CD4-positive, alpha-beta memory T cell (primary cell): ENCODE measurements at regions of chr1 and their contacts with region 1.

Region 1: GRCh38 chr1:90710579-90711536 is 6.2 kb downstream of the BARHL2 start:
- DNase-seq: no peak
- H3K4me3 ChIP-seq: no peak overlapping the region
- H3K4me3 Mint-ChIP-seq: no peak overlapping the region
- H3K27ac ChIP-seq: no peak overlapping the region
- H3K27ac Mint-ChIP-seq: no peak overlapping the region
- H3K4me1 ChIP-seq: peaks cover 13% of the 10 kb centered on the region
- H3K4me1 Mint-ChIP-seq: peaks cover 9 to 24% (median 15%) of the 10 kb centered on the region in 4 donors
- H3K27me3 ChIP-seq: peaks cover 71% of the 10 kb centered on the region
- H3K27me3 Mint-ChIP-seq: peaks cover 68 to 77% of the 10 kb centered on the region in 2 donors

Region 2: GRCh38 chr1:90694846-90695245 is 16.0 kb before region 1 on chr1:
- CTCF ChIA-PET with region 1: no interaction called
- POLR2A ChIA-PET with region 1: no interaction called
- intact Hi-C with region 1: no loop called
- DNase-seq: no peak
- H3K4me3 ChIP-seq: no peak overlapping the region
- H3K4me3 Mint-ChIP-seq: no peak overlapping the region
- H3K27ac ChIP-seq: no peak overlapping the region
- H3K27ac Mint-ChIP-seq: no peak overlapping the region
- H3K4me1 ChIP-seq: no peaks in the 10 kb centered on the region
- H3K4me1 Mint-ChIP-seq: no peaks in the 10 kb centered on the region
- H3K27me3 ChIP-seq: no peaks in the 10 kb centered on the region
- H3K27me3 Mint-ChIP-seq: peaks cover 15 to 24% of the 10 kb centered on the region in 2 donors

Region 3: GRCh38 chr1:90729504-90730242 is 18.8 kb after region 1 on chr1:
- CTCF ChIA-PET with region 1: interaction called, 3 read pairs
- POLR2A ChIA-PET with region 1: no interaction called
- intact Hi-C with region 1: loop called (anchors 2 kb)
- DNase-seq: no peak
- H3K4me3 ChIP-seq: no peak overlapping the region
- H3K4me3 Mint-ChIP-seq: peak overlapping the region; percentile 34 to 86 (median 66)
- H3K27ac ChIP-seq: no peak overlapping the region
- H3K27ac Mint-ChIP-seq: peak overlapping the region in 2 of 7 donors; percentile 31
- H3K4me1 ChIP-seq: peaks cover 52% of the 10 kb centered on the region
- H3K4me1 Mint-ChIP-seq: peaks cover 27 to 50% (median 38%) of the 10 kb centered on the region in 4 donors
- H3K27me3 ChIP-seq: peaks cover 76% of the 10 kb centered on the region
- H3K27me3 Mint-ChIP-seq: peaks cover 66 to 74% of the 10 kb centered on the region in 2 donors

Region 4: GRCh38 chr1:90761781-90762589 is 51.1 kb after region 1 on chr1:
- CTCF ChIA-PET with region 1: no interaction called
- POLR2A ChIA-PET with region 1: no interaction called
- intact Hi-C with region 1: no loop called
- DNase-seq: no peak
- H3K4me3 ChIP-seq: no peak overlapping the region
- H3K4me3 Mint-ChIP-seq: no peak overlapping the region
- H3K27ac ChIP-seq: no peak overlapping the region
- H3K27ac Mint-ChIP-seq: no peak overlapping the region
- H3K4me1 ChIP-seq: no peaks in the 10 kb centered on the region
- H3K4me1 Mint-ChIP-seq: peaks cover 3 to 5% (median 4%) of the 10 kb centered on the region in 4 donors
- H3K27me3 ChIP-seq: no peaks in the 10 kb centered on the region
- H3K27me3 Mint-ChIP-seq: peaks cover 24 to 32% of the 10 kb centered on the region in 2 donors